SK-MEL-5 (cell line): ENCODE measurements at regions of chr3 and their contacts with region 1.

Region 1: DNA sequence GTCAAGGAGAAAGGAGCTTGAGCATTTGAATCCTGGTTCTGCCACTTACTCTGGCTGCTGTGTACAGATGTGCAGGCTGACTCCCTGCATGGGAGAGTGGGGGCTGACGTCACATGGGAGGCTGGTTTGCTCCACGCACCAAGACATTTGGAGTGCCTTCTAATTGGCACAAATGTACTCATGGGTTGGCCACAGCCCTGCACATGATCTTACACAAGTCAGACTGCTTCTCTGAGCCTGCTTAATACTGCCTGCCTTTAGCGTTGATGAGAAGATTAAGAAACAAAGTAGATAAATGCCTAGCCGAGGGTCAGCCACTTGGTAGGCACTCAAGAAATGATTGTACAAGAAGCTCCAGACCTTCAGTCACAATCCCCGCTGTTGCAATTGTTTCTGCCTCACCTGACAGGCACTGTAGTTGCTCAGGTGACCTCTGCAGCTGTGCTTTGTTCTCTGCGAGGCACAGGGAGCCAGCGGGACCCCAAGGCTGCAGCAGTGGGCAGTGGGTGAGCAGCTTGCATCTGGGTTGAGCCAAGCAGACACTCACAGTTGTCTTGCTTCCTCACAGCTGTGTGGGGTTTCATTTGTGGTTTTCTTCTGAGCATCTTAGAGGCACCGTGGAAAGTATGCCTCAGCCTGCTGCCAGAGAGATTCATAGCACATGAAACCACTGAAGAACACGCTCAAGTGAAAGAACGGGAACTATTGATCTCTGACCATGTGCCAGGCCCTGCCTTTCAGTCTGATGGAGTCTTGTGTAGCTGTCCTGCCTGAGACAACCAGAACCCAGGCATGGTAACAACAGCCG is 33.1 kb downstream of the GRK7 start:
- DNase-seq: no peak

Region 2: DNA sequence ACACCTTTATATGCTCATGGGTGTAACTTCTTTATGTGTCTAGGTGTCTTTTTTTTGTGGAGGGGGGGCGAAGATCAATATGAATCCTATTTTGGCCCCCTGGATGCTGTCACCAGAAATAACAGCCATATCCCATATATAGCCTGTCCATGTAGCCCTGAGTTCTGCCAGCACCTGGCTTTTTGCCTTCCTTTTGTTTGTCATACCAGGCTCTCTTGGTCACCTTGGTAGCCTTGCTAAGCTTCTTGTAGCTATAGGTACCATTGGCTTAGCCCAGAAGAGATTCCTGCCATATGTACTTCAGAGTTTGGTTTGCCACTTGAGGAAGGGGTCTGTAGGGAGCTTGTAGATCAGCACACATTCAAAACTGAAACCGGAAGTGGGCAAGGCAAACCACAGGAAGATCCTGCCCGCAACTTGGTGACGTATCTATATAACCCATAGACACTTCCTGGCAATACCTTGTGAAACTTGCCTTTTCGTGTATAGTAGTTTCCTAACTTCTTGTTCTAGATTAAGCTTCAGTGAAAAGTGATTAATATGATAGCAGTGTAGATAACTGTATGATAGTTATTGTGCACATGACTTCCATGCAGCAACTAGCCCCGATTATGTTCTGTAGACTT is 297.6 kb before region 1 on chr3:
- in situ Hi-C with region 1: no loop called
- DNase-seq: peak; percentile 6

Region 3: DNA sequence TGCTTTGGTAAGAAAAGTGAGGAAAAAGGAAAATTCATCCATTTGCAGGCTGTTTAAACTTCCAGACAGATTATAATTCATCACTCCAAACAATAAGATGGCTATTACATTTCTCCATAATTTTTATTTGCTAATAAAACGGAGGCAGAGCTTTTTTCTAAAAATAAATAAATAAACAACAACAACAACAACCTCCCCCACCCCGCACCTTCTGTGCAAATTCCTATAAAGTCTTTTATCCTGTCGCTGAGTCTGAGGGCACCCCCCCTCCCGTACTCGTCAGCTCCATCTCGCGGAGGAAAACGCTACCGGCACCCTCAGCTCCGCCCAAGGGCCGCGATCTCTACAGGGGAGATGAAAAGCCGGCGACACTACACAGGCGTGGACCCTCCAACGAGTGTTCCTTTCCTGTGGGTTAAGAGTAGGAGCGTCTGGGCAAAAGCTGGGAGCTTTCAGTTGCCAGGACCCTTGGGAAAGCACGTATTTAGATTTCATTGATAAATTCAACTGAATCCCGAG is 79.1 kb after region 1 on chr3:
- in situ Hi-C with region 1: loop called (anchors 25 kb)
- DNase-seq: peak; percentile 86